Activated T-helper 2 cell treated with anti-CD3 and anti-CD28 coated beads, Interferon-gamma antibody, Interleukin-2, Interleukin-4, amounts not matched to agents 10 μg/mL and 5 μg/mL and 100 μg/mL, durations not matched to agents 14 hours and 24 hours and 36 hours (primary cell): ENCODE measurements at regions of chr16 and their contacts with region 1.

Region 1: GRCh38 chr16:89217388-89218191 is at the start of gene ZNF778:
- DNase-seq: peak; percentile 83
- H3K4me3 Mint-ChIP-seq: peak within 1 kb of the TSS; percentile 88
- H3K27ac Mint-ChIP-seq: peak within 1 kb of the TSS; percentile 76
- H3K4me1 Mint-ChIP-seq: peaks cover 13% of the 10 kb centered on the region
- H3K27me3 Mint-ChIP-seq: no peaks in the 10 kb centered on the region
- total RNA-seq, gene ZNF778: 5.6 and 7.7 TPM in 2 replicates

Region 2: GRCh38 chr16:88811769-88812512 is 405.6 kb before region 1 on chr16 and contains the start of gene APRT:
- intact Hi-C with region 1: loop called (anchors 5 kb)
- DNase-seq: peak; percentile 97
- H3K4me3 Mint-ChIP-seq: peak within 1 kb of the TSS; percentile 90
- H3K27ac Mint-ChIP-seq: peak within 1 kb of the TSS; percentile 97
- H3K4me1 Mint-ChIP-seq: peaks cover 9% of the 10 kb centered on the region
- H3K27me3 Mint-ChIP-seq: no peaks in the 10 kb centered on the region
- total RNA-seq, gene APRT: 294 and 300 TPM in 2 replicates

Region 3: GRCh38 chr16:88941913-88942909 is 275.4 kb before region 1 on chr16:
- intact Hi-C with region 1: loop called (anchors 1 kb)
- DNase-seq: peak; percentile 31
- H3K4me3 Mint-ChIP-seq: no peak overlapping the region
- H3K27ac Mint-ChIP-seq: no peak overlapping the region
- H3K4me1 Mint-ChIP-seq: no peaks in the 10 kb centered on the region
- H3K27me3 Mint-ChIP-seq: peaks cover 36% of the 10 kb centered on the region

Region 4: DNA sequence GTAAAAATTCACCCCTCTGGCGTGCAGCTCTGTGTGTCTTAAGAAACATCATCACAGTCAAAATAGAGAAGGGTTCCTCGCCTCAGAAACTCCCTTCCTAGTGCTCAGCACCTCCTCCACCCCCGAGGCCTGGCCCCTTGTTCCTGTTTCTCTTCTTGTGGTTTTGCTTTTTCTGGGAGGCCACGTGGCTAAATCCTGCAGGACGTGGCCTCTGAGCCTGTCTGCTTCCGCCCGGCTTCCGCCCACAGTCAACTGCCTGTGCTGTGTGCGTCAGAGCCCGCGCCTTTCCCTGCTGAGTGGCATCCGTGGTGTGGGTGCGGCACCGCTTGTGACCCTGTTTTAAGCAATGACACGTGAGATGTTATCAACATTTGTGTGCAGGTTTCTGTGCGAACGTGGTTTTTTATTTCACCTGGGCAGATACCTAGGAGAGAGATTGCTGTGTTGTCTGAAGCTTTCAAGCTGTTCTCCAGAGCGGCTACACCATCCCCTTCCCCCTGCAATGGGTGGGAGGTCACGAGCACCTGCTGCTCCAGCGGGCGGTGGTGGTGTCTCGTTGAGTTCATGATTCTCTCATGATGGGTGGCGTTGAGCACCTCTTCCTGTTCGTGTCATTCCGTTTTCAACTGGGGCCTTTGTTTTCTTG is 102.3 kb before region 1 on chr16:
- intact Hi-C with region 1: loop called (anchors 10 kb)
- DNase-seq: peak; percentile 87
- H3K4me3 Mint-ChIP-seq: peak overlapping the region; percentile 79
- H3K27ac Mint-ChIP-seq: peak overlapping the region; percentile 91
- H3K4me1 Mint-ChIP-seq: peaks cover 31% of the 10 kb centered on the region
- H3K27me3 Mint-ChIP-seq: no peaks in the 10 kb centered on the region

Region 5: GRCh38 chr16:89171463-89172170 is 46.0 kb before region 1 on chr16 and contains the start of gene CDH15:
- intact Hi-C with region 1: loop called (anchors 2 kb)
- DNase-seq: peak; percentile 88
- H3K4me3 Mint-ChIP-seq: peak within 1 kb of the TSS; percentile 62
- H3K27ac Mint-ChIP-seq: no peak within 1 kb of the TSS
- H3K4me1 Mint-ChIP-seq: peaks cover 4% of the 10 kb centered on the region
- H3K27me3 Mint-ChIP-seq: peaks cover 4% of the 10 kb centered on the region
- total RNA-seq, gene CDH15: not detected in 2 replicates

Region 6: DNA sequence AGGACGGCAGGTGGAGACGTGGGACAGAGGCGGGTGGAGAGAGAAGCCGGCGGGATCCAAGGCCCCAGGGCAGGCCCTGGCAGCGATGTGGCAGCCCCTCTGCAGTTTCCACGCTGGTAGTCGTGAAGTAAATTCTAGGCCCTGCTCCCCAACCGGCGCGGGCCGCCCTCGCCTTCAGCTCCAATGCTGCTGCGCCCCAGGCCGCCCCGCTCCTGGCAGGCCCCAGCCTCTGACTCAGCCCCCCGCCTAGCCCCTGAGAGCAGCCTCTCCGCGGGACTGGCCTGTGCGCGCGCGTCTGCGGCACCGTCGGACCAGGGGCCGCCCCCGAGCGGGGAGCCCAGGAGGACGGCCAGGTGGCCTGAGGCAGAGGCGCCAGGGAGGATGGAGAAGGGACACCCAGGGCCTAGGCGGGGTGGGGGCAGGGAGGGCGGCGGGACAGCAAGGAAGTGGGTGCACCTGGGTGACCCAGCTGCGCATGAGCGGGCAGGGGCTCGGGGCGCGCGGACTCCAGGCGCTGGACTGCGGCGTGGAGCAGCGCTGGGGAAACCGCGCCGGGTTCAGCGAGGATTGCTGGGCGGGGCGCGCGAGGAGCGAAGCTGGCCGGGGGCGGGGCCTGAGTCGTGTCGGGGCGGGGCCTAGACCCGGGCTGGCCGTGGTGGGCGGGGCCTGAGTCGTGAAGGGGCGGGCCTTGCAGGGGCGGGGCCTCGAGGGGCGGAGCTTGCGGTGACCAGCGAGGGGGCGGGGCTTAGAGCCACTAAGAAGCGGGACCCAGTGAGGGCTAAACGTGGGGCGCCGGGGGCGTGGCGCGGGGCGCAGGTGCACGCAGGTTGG is 29.5 kb after region 1 on chr16:
- intact Hi-C with region 1: loop called (anchors 2 kb)
- DNase-seq: peak; percentile 87
- H3K4me3 Mint-ChIP-seq: peak overlapping the region; percentile 53
- H3K27ac Mint-ChIP-seq: no peak overlapping the region
- H3K4me1 Mint-ChIP-seq: peaks cover 7% of the 10 kb centered on the region
- H3K27me3 Mint-ChIP-seq: peaks cover 2% of the 10 kb centered on the region

Region 7: DNA sequence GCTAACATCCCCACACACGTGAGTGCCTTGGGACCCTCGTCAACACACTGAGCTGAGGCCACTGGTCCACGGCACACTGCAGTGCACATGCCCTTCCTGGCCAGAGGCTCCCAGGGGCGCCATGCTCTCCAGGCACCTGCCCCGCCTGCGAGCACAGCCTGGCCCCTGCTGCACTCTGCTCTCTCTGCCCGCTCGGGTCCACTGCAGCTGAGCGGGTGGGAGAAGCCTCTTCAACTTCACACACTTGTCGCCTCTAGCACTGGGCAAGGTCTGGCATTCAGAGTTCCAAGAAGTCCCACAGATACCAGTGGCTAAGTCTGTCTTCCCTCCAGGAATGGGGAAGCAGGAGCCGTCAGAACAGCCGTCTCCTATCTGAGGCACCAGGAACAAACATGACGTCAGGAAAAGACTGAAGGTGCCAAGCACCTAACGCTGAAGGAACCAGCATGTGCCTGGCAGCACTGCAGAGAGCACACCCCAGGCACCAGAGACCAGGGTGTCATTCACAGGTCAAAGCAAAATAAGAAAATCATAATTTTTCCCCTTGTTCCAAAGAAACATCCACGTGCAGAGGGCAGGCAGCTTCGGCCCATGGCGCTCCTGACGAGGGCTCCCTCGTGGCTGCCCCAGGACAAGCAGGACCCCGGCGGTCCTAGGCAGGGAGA is 82.9 kb after region 1 on chr16:
- intact Hi-C with region 1: no loop called
- DNase-seq: no peak
- H3K4me3 Mint-ChIP-seq: no peak overlapping the region
- H3K27ac Mint-ChIP-seq: no peak overlapping the region
- H3K4me1 Mint-ChIP-seq: peaks cover 17% of the 10 kb centered on the region
- H3K27me3 Mint-ChIP-seq: no peaks in the 10 kb centered on the region